ENCODE measurements at regions of chr4 and their contacts with region 1.

Region 1: GRCh38 chr4:30719460-30720020 is 629 bp upstream of the PCDH7 start:
- DNase-seq: peak; percentile 68
- ATAC-seq: peak; percentile 35
- H3K4me3 ChIP-seq: peak overlapping the region; percentile 78
- H3K27ac ChIP-seq: peak overlapping the region; percentile 45
- H3K4me1 ChIP-seq: peaks cover 2% of the 10 kb centered on the region; the same call in 1 of the 2 replicates
- H3K27me3 ChIP-seq: no peaks in the 10 kb centered on the region; the same call in 1 of the 2 replicates
- CTCF ChIP-seq: no peak
- POLR2A ChIP-seq: 0 out of 2 replicates have a peak, but pooled peaks have one; percentile 32
- RAD21 ChIP-seq: peak; percentile 14; the same call in 1 of the 2 replicates

Region 2: DNA sequence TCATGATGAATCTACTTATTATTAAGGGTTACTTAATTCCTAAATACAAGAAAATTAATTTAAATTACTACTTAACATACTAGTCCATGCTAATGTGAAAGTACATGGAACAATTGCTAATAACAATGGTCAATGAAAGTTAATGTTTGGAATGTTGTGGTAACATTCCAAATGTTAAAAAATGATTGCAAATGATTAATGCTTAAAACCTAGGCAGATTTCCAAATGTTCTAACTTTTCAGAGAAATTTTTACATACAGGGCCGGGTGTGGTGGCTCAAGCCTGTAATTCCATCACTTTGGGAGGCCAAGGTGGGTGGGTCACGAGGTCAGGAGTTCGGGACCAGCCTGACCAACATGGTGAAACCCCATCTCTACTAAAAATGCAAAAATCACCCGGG is 1850.7 kb before region 1 on chr4:
- CTCF ChIA-PET with region 1: no interaction called
- POLR2A ChIA-PET with region 1: no interaction called
- dilution Hi-C with region 1: no loop called
- in situ Hi-C with region 1: no loop called
- intact Hi-C with region 1: no loop called
- DNase-seq: no peak
- ATAC-seq: no peak
- H3K4me3 ChIP-seq: no peak overlapping the region
- H3K27ac ChIP-seq: no peak overlapping the region
- H3K4me1 ChIP-seq: no peaks in the 10 kb centered on the region
- H3K27me3 ChIP-seq: no peaks in the 10 kb centered on the region
- CTCF ChIP-seq: no peak
- POLR2A ChIP-seq: no peak
- RAD21 ChIP-seq: no peak

Region 3: DNA sequence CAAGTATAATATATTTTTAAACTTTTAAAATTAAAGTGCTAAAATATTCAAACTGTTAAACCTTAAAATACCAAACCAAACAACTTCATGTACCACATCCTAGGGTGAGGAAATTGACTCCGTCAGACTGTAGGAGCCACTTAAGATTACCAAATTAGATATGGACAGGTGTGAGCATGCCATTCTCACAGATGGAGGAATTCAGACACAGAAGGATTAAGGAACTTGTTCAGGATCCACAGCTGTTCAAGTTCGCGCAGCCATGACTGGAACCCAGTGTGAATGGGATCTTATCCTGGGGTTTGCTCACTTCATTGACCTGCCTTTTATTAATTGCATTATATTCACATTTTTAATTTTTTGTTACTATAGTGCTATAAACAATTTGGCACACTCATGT is 224.3 kb before region 1 on chr4:
- CTCF ChIA-PET with region 1: no interaction called
- POLR2A ChIA-PET with region 1: no interaction called
- dilution Hi-C with region 1: no loop called
- in situ Hi-C with region 1: no loop called
- intact Hi-C with region 1: no loop called
- DNase-seq: no peak
- ATAC-seq: no peak
- H3K4me3 ChIP-seq: no peak overlapping the region
- H3K27ac ChIP-seq: no peak overlapping the region
- H3K4me1 ChIP-seq: no peaks in the 10 kb centered on the region
- H3K27me3 ChIP-seq: no peaks in the 10 kb centered on the region
- CTCF ChIP-seq: no peak
- POLR2A ChIP-seq: no peak
- RAD21 ChIP-seq: no peak

Region 4: DNA sequence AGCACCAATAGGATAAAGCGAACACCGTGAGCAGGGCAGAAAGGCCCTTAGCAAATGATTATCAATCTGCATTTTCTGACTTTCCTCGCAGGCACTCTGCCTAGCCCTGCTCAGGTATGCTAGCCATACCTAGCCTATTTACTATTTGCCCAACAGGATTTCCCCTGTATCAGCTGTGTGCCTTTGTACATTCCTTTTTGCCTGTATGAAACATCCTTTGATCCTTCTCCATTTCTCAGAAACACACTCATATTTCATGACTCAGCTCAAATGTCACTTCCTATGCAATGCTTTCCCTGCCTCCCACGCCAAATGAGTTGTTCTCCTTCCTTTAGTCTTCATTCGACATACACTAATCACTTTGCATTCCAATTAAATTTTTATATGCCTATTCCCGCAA is 37.8 kb after region 1 on chr4:
- CTCF ChIA-PET with region 1: no interaction called
- POLR2A ChIA-PET with region 1: interaction called, 3 read pairs
- dilution Hi-C with region 1: no loop called
- in situ Hi-C with region 1: no loop called
- intact Hi-C with region 1: loop called (anchors 5 kb)
- DNase-seq: peak; percentile 92
- ATAC-seq: peak; percentile 77
- H3K4me3 ChIP-seq: no peak overlapping the region
- H3K27ac ChIP-seq: peak overlapping the region; percentile 78
- H3K4me1 ChIP-seq: peaks cover 21% of the 10 kb centered on the region
- H3K27me3 ChIP-seq: no peaks in the 10 kb centered on the region
- CTCF ChIP-seq: no peak
- POLR2A ChIP-seq: no peak
- RAD21 ChIP-seq: no peak

Region 5: DNA sequence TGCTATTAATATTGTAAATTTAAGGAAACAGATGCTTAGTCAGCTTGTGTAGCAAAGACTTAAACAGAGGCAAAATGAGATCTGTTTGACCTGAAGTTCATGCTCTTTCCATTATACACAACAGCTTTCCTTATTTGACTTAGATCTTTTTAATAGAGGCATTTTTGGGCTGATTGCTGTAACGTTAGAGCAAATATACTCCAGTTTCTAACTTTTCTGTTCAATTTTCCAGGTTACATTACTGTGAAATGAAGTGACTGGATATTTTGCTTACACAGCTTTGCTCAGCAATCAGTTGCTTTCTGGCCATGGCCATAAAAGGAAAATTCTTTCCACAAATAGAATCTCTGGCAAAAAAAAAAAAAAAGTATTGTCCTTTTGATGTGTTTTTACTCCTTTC is 146.8 kb after region 1 on chr4:
- CTCF ChIA-PET with region 1: no interaction called
- POLR2A ChIA-PET with region 1: no interaction called
- dilution Hi-C with region 1: no loop called
- in situ Hi-C with region 1: no loop called
- intact Hi-C with region 1: loop called (anchors 5 kb)
- DNase-seq: peak; percentile 43
- ATAC-seq: peak; percentile 56
- H3K4me3 ChIP-seq: no peak overlapping the region
- H3K27ac ChIP-seq: peak overlapping the region; percentile 38; the same call in 1 of the 2 replicates
- H3K4me1 ChIP-seq: peaks cover 10% of the 10 kb centered on the region
- H3K27me3 ChIP-seq: no peaks in the 10 kb centered on the region
- CTCF ChIP-seq: no peak
- POLR2A ChIP-seq: no peak
- RAD21 ChIP-seq: no peak

Region 6: GRCh38 chr4:30948653-30949052 is 229.1 kb after region 1 on chr4:
- CTCF ChIA-PET with region 1: no interaction called
- POLR2A ChIA-PET with region 1: no interaction called
- dilution Hi-C with region 1: no loop called
- in situ Hi-C with region 1: no loop called
- intact Hi-C with region 1: loop called (anchors 5 kb)
- DNase-seq: peak; percentile 58
- ATAC-seq: peak; percentile 76
- H3K4me3 ChIP-seq: no peak overlapping the region
- H3K27ac ChIP-seq: no peak overlapping the region
- H3K4me1 ChIP-seq: peaks cover 3% of the 10 kb centered on the region; the same call in 1 of the 2 replicates
- H3K27me3 ChIP-seq: no peaks in the 10 kb centered on the region; the same call in 1 of the 2 replicates
- CTCF ChIP-seq: no peak
- POLR2A ChIP-seq: no peak
- RAD21 ChIP-seq: no peak

Measured in IMR-90 (cell line).